ENCODE measurements at regions of chr1 and their contacts with region 1.

Region 1: GRCh38 chr1:212749821-212750535 is 41.6 kb downstream of the NSL1 start:
- DNase-seq: no peak
- ATAC-seq: peak; percentile 61
- H3K4me3 Mint-ChIP-seq: no peak overlapping the region
- H3K27ac Mint-ChIP-seq: peak overlapping the region; percentile 94
- H3K4me1 Mint-ChIP-seq: peaks cover 42% of the 10 kb centered on the region
- H3K27me3 Mint-ChIP-seq: no peaks in the 10 kb centered on the region
- CTCF ChIP-seq: peak; percentile 76

Region 2: DNA sequence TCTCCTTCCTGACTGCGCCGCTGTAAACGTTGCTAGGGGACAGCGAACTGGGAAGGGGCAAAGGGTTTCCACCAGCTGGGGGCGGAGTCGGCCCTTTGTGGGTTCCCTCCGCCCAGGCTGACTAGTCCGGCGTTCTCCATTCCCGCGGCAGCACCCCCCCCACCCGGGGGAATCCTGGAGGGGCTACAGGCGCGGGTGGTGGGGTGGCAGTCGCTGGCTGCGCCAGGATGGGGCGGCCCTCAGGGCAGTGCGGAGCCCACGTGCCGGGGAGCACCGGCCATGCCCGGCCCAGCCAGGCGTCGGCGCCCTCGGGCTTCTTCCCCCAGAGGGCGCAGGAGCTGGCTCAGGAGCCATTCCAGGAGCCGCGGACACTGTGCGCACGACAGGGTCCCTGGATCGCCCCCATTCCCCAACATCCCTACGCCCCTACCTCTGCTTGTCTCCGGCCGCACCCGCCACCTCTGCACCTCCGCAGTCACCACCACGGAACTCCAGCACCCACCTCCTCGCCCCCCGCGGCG is 50.8 kb before region 1 on chr1:
- CTCF ChIA-PET with region 1: interaction called, 11 read pairs
- POLR2A ChIA-PET with region 1: no interaction called
- DNase-seq: peak; percentile 76
- ATAC-seq: peak; percentile 82
- H3K4me3 Mint-ChIP-seq: peak overlapping the region; percentile 63
- H3K27ac Mint-ChIP-seq: no peak overlapping the region
- H3K4me1 Mint-ChIP-seq: peaks cover 18% of the 10 kb centered on the region
- H3K27me3 Mint-ChIP-seq: peaks cover 84% of the 10 kb centered on the region
- CTCF ChIP-seq: no peak

Region 3: DNA sequence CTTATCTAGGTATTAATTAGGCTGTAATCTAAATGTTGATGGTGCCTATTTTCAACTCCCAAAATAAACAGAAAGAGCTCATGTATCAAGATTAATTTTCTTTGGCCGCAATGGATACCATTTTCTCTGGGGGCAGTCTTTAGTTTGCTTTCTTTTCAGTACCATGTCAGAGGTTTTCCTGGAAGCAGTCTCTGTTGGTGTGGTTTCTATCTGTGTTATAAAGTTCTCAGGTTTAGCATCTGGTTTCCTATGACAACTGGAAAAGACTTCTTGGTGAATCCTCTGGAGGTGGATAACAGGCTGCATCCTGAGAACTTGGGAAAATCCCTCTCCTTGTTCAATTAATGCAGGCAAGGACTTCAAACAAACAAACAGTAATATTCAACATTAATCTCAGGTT is 11.6 kb before region 1 on chr1:
- CTCF ChIA-PET with region 1: interaction called, 22 read pairs
- POLR2A ChIA-PET with region 1: no interaction called
- DNase-seq: no peak
- ATAC-seq: no peak
- H3K4me3 Mint-ChIP-seq: no peak overlapping the region
- H3K27ac Mint-ChIP-seq: peak overlapping the region; percentile 75; the same call in 1 of the 2 replicates
- H3K4me1 Mint-ChIP-seq: no peaks in the 10 kb centered on the region
- H3K27me3 Mint-ChIP-seq: no peaks in the 10 kb centered on the region
- CTCF ChIP-seq: no peak

Region 4: DNA sequence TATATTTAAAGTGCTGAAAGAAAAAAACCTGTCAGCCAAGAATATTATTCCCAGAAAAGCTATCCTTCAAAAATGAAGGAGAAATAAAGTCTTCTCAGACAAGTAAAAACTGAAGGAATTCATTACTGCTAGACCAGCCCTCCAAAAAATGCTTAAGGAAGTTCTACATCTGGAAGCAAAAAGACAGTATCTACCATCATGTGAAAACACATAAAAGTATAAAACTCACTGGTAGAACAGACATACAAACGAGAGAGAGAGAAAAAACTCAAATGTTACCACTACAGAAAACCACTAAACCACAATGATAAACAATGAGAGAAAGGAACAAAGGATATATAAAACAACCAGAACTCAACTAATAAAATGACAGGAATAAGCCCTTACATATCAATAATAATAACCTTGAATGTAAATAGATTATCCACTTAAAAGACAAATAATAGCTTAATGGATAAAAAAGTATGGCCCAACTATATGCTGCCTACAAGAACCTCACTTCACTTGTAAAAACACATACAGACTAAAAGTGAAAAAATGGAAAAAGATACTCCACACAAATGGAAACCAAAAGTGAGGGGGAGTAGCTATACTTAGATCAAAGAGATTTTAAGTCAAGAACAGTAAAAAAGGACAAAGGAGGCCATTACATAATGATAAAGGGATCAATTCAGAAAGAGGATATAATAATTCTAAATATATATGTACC is 19.6 kb after region 1 on chr1:
- CTCF ChIA-PET with region 1: interaction called, 33 read pairs
- POLR2A ChIA-PET with region 1: no interaction called
- DNase-seq: no peak
- ATAC-seq: no peak
- H3K4me3 Mint-ChIP-seq: no peak overlapping the region
- H3K27ac Mint-ChIP-seq: no peak overlapping the region
- H3K4me1 Mint-ChIP-seq: 0 out of 2 replicates have a peak, but pooled peaks cover 4% of the 10 kb centered on the region
- H3K27me3 Mint-ChIP-seq: no peaks in the 10 kb centered on the region; the same call in 1 of the 2 replicates
- CTCF ChIP-seq: no peak

Region 5: DNA sequence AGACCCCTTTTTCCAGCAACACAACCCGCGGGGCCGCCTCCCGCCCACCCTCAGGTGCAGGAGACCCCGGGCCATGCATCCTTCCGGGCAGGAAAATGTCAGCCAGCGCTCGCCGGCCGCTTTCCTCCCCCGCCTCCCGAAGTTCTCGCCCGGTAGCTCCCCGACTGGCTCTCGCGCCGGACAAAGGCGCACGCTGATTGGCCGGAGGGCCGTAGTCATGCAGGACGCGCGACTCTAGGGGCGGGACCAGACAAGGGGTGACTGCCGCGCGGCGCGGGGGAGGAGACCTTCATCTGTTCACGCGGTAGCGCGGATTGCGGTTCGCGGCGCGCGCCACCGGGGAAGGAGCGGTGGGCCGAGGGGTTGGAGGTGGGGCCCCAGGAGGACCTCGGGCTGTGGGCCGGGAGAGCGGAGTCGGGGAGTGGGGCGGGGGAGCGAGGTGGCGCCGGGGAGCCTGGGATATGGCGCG is 108.0 kb after region 1 on chr1 and contains the start of gene FLVCR1:
- CTCF ChIA-PET with region 1: interaction called, 15 read pairs
- POLR2A ChIA-PET with region 1: no interaction called
- DNase-seq: peak; percentile 98
- ATAC-seq: peak; percentile 94
- H3K4me3 Mint-ChIP-seq: no peak within 1 kb of the TSS
- H3K27ac Mint-ChIP-seq: peak within 1 kb of the TSS; percentile 96
- H3K4me1 Mint-ChIP-seq: peaks cover 34% of the 10 kb centered on the region
- H3K27me3 Mint-ChIP-seq: peaks cover 10% of the 10 kb centered on the region
- CTCF ChIP-seq: no peak
- total RNA-seq, gene FLVCR1: 67.9 to 78.6 TPM (median 69.4 TPM) in 3 replicates

Measured in WTC11 (cell line).